RWPE1 (cell line): ENCODE measurements at regions of chr4 and their contacts with region 1.

Region 1: DNA sequence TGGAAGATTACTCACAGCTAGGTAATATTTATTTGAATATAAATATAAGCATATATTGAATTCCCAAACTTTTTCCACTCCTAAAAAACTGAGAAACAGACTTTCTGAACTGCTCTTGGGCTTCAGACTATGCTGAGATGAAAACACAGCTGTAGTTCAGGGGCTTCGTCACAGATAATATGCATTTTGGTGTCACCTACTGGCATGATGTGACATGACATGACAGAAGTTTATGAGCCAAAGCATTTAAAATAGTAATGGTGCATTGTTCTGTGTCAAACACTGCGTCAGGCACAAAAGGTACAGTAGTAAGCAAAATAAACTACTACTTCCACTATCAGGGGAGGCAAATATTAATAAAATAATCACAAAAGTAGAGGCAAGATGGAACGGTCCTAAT is 171.3 kb downstream of the BTC start:
- DNase-seq: no peak
- H3K27ac ChIP-seq: no peak overlapping the region
- CTCF ChIP-seq: peak; percentile 36

Region 2: GRCh38 chr4:74201662-74202061 is 421.4 kb before region 1 on chr4:
- CTCF ChIA-PET with region 1: interaction called, 13 read pairs
- POLR2A ChIA-PET with region 1: no interaction called
- DNase-seq: no peak
- H3K27ac ChIP-seq: no peak overlapping the region
- CTCF ChIP-seq: no peak

Region 3: GRCh38 chr4:74516321-74516720 is 106.7 kb before region 1 on chr4:
- CTCF ChIA-PET with region 1: interaction called, 10 read pairs
- POLR2A ChIA-PET with region 1: no interaction called
- DNase-seq: no peak
- H3K27ac ChIP-seq: no peak overlapping the region
- CTCF ChIP-seq: no peak

Region 4: DNA sequence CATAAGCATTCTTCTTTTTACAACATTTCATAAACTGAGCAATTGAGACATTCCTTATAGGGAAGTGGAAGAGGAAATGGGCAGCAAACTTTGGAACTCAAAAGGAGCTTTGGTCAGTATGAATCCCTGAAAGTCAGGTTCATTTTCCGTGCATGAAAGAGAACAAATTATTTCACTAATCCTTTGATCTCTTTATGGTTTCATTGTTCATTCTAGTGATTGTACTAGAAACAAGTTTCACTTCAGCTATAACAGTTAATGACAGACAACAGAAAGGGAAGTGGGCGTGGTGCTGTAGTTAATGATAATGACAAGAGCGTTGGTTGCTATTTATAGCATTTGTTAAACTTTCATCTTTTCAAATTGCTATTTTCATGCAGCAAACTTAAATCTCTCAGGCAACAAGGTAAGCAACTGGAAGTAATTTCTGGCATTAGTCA is 79.8 kb before region 1 on chr4:
- CTCF ChIA-PET with region 1: no interaction called
- POLR2A ChIA-PET with region 1: no interaction called
- DNase-seq: no peak
- H3K27ac ChIP-seq: no peak overlapping the region
- CTCF ChIP-seq: no peak